Activated B cell treated with CpG ODN at 0.5 μM for 24 hours (primary cell): ENCODE measurements at regions of chr5 and their contacts with region 1.

Region 1: DNA sequence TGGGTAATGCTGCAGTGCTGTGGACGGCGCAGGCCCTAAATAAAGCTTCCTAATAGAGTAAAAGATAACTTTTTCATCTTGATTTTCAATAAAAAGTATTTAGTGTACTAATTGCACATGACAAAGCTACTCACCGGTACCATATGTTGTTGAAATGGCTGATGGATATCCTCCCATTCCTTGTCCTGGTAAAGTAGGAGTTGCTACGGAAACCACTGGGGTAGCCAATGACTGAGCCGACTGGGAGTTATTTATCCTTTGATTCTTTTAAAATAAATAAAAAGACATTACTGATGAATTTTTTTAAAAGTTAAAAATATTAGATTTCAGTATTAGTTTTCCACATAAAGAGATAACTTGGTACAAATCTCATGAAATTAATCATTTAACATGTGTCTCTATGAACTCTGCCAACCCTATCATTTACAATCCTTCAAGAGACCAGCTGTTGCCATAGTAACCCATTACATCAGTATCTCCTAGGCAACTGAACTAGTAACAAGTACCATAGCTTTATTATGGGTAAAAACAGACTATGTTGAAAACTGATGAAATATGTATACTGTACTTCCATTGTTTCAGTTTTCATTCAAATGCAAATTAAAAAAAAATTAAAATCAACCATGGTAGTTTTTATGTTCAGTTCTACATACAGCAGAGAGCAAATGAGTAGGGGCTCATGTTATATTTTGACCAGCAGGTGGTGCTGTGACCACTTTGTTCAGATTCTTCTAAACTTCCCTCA is 153.7 kb downstream of the MEF2C start:
- DNase-seq: no peak
- ATAC-seq: peak; percentile 21
- H3K4me3 Mint-ChIP-seq: no peak overlapping the region
- H3K27ac Mint-ChIP-seq: peak overlapping the region; percentile 78
- H3K4me1 Mint-ChIP-seq: peaks cover 51% of the 10 kb centered on the region
- H3K27me3 Mint-ChIP-seq: no peaks in the 10 kb centered on the region
- CTCF ChIP-seq: peak; percentile 58

Region 2: DNA sequence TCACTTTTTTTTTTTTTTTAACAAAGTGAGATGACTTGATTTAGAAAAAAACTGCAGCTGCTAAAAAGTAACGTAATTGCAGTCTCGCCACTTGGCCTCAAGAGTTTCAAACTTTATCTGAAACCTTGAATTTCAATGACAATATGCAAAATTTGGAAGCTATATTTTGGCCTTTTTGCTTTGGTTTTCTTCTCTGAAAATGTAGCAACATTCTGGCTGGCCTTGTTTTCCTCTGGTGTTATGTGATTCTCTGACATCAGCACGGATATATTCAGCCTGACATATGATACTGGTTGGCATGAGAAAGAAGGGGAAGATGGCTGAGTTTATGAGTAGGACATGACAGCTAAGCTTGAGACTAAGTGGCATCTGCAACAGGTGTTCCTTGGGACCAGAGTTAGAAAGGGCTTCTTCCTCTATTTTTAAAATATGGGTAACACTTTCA is 17.2 kb after region 1 on chr5:
- CTCF ChIA-PET with region 1: interaction called, 7 read pairs
- POLR2A ChIA-PET with region 1: interaction called, 92 read pairs
- intact Hi-C with region 1: loop called (anchors 1 kb)
- DNase-seq: no peak
- ATAC-seq: peak; percentile 79
- H3K4me3 Mint-ChIP-seq: no peak overlapping the region
- H3K27ac Mint-ChIP-seq: peak overlapping the region; percentile 80
- H3K4me1 Mint-ChIP-seq: peaks cover 56% of the 10 kb centered on the region
- H3K27me3 Mint-ChIP-seq: no peaks in the 10 kb centered on the region
- CTCF ChIP-seq: no peak

Region 3: GRCh38 chr5:88826646-88827585 is 97.7 kb after region 1 on chr5:
- CTCF ChIA-PET with region 1: interaction called, 24 read pairs
- POLR2A ChIA-PET with region 1: interaction called, 229 read pairs
- intact Hi-C with region 1: loop called (anchors 1 kb)
- DNase-seq: peak; percentile 31
- ATAC-seq: peak; percentile 77
- H3K4me3 Mint-ChIP-seq: peak overlapping the region; percentile 72
- H3K27ac Mint-ChIP-seq: peak overlapping the region; percentile 91
- H3K4me1 Mint-ChIP-seq: peaks cover 93% of the 10 kb centered on the region
- H3K27me3 Mint-ChIP-seq: no peaks in the 10 kb centered on the region
- CTCF ChIP-seq: no peak

Region 4: GRCh38 chr5:88899096-88899737 is 170.0 kb after region 1 on chr5:
- CTCF ChIA-PET with region 1: no interaction called
- POLR2A ChIA-PET with region 1: no interaction called
- intact Hi-C with region 1: no loop called
- DNase-seq: no peak
- ATAC-seq: no peak
- H3K4me3 Mint-ChIP-seq: no peak overlapping the region
- H3K27ac Mint-ChIP-seq: no peak overlapping the region
- H3K4me1 Mint-ChIP-seq: peaks cover 14% of the 10 kb centered on the region
- H3K27me3 Mint-ChIP-seq: no peaks in the 10 kb centered on the region
- CTCF ChIP-seq: no peak

Region 5: GRCh38 chr5:89071101-89071940 is 342.1 kb after region 1 on chr5:
- CTCF ChIA-PET with region 1: no interaction called
- POLR2A ChIA-PET with region 1: interaction called, 3 read pairs
- intact Hi-C with region 1: loop called (anchors 5 kb)
- DNase-seq: no peak
- ATAC-seq: no peak
- H3K4me3 Mint-ChIP-seq: peak overlapping the region; percentile 59
- H3K27ac Mint-ChIP-seq: peak overlapping the region; percentile 50
- H3K4me1 Mint-ChIP-seq: peaks cover 23% of the 10 kb centered on the region
- H3K27me3 Mint-ChIP-seq: no peaks in the 10 kb centered on the region
- CTCF ChIP-seq: no peak

Region 6: GRCh38 chr5:89396278-89396954 is 667.2 kb after region 1 on chr5:
- CTCF ChIA-PET with region 1: no interaction called
- POLR2A ChIA-PET with region 1: interaction called, 6 read pairs
- intact Hi-C with region 1: loop called (anchors 5 kb)
- DNase-seq: no peak
- ATAC-seq: peak; percentile 59
- H3K4me3 Mint-ChIP-seq: peak overlapping the region; percentile 60
- H3K27ac Mint-ChIP-seq: peak overlapping the region; percentile 88
- H3K4me1 Mint-ChIP-seq: peaks cover 61% of the 10 kb centered on the region
- H3K27me3 Mint-ChIP-seq: no peaks in the 10 kb centered on the region
- CTCF ChIP-seq: no peak

Region 7: GRCh38 chr5:90015584-90016018 is 1286.3 kb after region 1 on chr5:
- CTCF ChIA-PET with region 1: no interaction called
- POLR2A ChIA-PET with region 1: no interaction called
- intact Hi-C with region 1: loop called (anchors 5 kb)
- DNase-seq: no peak
- ATAC-seq: no peak
- H3K4me3 Mint-ChIP-seq: no peak overlapping the region
- H3K27ac Mint-ChIP-seq: no peak overlapping the region
- H3K4me1 Mint-ChIP-seq: peaks cover 9% of the 10 kb centered on the region
- H3K27me3 Mint-ChIP-seq: no peaks in the 10 kb centered on the region
- CTCF ChIP-seq: no peak

Region 8: DNA sequence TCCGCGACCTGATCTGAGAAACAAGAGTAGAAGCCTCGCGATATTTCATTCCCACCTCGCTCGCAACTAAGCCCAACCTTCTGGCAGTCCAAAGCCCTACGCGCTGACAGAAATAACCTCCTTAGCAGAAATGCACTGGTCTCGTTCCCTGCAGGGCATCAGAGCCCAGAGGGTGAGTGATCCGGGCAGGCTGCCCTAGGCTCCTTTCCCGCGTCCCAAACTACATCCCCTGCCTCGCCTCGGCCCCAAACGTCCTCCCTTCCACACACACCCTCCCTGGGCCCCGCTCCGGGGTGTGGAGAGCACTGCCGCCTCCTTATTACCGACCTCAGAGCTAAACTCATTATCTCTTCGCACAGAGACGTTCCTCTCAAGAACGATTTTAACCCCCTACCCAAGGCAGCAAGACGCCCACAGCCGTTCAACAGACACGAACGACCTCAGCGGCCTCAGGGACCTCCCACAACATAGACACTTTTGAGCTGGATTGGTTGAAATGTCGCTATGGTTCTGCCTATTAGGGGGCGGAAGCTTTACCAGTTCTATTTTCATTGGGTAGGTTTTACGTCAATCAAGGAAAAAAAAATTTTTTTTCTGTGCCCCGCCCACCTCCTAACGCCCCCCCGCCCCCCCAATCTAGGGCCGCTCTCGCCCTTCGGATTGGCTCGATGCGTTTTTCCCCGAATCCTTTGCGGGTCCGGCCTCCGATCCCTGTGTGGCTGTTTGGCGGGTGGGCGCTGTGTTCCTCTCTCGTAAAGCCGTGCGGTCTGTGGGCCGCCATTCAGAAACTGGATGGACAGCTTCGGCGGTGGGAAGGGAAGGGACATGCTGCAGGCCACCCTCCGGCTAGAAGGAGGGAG is 1680.3 kb after region 1 on chr5 and contains the start of gene CETN3:
- CTCF ChIA-PET with region 1: interaction called, 3 read pairs
- POLR2A ChIA-PET with region 1: interaction called, 5 read pairs
- intact Hi-C with region 1: loop called (anchors 1 kb)
- DNase-seq: peak; percentile 79
- ATAC-seq: peak; percentile 93
- H3K4me3 Mint-ChIP-seq: no peak within 1 kb of the TSS
- H3K27ac Mint-ChIP-seq: no peak within 1 kb of the TSS
- H3K4me1 Mint-ChIP-seq: peaks cover 11% of the 10 kb centered on the region
- H3K27me3 Mint-ChIP-seq: no peaks in the 10 kb centered on the region
- CTCF ChIP-seq: no peak
- total RNA-seq, gene CETN3: 19.1 and 20.3 TPM in 2 replicates